ENCODE measurements at regions of chr19 and their contacts with region 1.

Region 1: DNA sequence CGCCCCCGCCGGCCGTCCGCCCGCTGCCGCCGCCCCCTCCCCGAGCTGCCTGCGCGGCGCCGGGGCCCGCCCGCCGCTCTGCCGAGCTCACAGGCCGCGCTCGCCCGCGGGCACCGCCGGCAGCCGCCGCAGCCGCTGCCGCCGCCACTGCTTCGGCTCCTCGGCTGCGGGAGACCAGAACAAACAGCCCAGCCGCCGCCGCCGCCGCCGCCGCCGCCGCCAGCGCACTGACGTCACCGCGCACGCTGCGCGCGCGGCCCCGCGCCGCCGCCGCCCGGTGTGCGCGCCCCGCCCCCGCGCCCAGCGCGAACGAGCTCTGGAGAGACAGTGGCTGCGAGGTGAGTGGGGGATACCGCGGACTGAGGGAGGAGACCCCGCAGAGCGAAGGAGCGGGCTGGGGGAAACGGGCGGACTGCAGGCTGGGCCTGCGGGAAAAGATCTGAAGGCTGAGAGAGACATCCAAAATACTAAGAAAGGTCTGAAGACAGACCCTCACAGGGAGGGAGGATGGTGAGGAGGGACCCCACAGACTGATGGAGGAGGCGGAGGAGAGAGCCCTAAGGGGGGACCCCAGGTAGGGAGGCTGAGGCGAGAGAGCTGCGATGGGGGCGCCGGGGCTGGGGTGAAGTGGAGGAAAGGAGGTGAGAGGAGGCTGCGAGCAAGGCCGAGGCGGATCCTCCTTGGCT is at the start of gene BRD4:
- H3K4me3 Mint-ChIP-seq: peak within 1 kb of the TSS; percentile 94
- H3K27ac Mint-ChIP-seq: peak within 1 kb of the TSS; percentile 91
- H3K4me1 Mint-ChIP-seq: peaks cover 54% of the 10 kb centered on the region
- H3K27me3 Mint-ChIP-seq: no peaks in the 10 kb centered on the region

Region 2: DNA sequence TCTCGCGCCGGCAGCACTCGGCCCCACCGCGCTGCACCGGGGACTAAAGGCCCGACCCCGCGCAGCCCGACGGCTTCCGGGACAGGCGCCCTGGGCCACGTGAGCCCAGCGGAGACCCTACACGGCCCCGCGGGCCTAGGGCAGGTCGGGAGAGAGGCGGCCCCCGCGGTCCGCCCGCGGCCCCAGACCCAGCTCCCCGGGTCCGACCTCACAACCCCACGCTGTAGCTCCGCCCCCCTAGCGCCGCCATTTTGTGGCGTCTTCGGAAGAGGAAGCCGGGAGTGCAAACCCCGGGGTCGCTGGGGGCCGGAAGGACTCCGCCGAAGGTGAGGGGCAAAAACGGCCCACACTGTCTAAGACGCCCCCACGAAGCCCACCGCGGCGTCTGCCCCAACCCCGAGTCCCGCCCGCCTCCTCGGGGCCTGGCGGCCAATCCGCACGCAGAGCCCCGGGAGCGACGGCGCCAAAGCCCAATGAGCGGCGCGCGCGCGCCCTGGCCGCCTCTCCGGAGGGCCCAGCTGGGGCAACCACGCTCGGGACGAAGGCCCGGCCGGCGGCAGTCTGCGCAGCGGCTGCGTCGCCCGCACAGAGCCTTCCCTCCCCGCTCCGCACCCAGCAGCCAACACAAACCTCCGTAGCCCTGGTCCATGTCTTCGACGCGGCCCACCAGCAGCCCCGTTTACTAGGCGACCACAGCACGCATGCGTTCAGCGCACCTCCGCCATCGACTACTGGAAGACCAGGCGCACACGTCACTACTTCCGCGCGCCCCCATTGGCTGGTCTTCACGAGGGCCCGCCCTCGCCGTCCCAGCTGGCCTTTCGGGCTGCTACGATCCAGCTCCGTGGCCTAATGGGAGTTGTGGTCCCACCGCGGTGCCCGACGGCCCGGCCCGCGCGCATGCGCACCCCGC is 46.9 kb after region 1 on chr19 and contains the start of gene AKAP8:
- intact Hi-C with region 1: loop called (anchors 5 kb)
- H3K4me3 Mint-ChIP-seq: peak within 1 kb of the TSS; percentile 93
- H3K27ac Mint-ChIP-seq: peak within 1 kb of the TSS; percentile 97
- H3K4me1 Mint-ChIP-seq: peaks cover 49% of the 10 kb centered on the region
- H3K27me3 Mint-ChIP-seq: no peaks in the 10 kb centered on the region